ENCODE measurements at regions of chr6 and their contacts with region 1.

Region 1: GRCh38 chr6:99344289-99344688 is 5.2 kb downstream of the FAXC start:
- DNase-seq: peak in 1 of 3 donors; percentile 24
- H3K4me3 ChIP-seq: no peak overlapping the region
- H3K27ac ChIP-seq: no peak overlapping the region
- H3K4me1 ChIP-seq: peaks cover 0 to 5% (median 5%) of the 10 kb centered on the region in 4 experiments
- H3K27me3 ChIP-seq: peaks cover 19 to 55% (median 24%) of the 10 kb centered on the region in 5 experiments

Region 2: GRCh38 chr6:99330159-99330558 is 14.1 kb before region 1 on chr6:
- CTCF ChIA-PET with region 1: interaction called, 22 read pairs
- POLR2A ChIA-PET with region 1: no interaction called
- DNase-seq: peak; percentile 58 to 86 (median 85)
- H3K4me3 ChIP-seq: no peak overlapping the region
- H3K27ac ChIP-seq: no peak overlapping the region
- H3K4me1 ChIP-seq: peaks cover 0 to 2% (median 0%) of the 10 kb centered on the region in 4 experiments
- H3K27me3 ChIP-seq: peaks cover 0 to 11% (median 5%) of the 10 kb centered on the region in 5 experiments

Region 3: GRCh38 chr6:99514089-99514488 is 169.8 kb after region 1 on chr6:
- CTCF ChIA-PET with region 1: no interaction called
- POLR2A ChIA-PET with region 1: no interaction called
- DNase-seq: no peak
- H3K4me3 ChIP-seq: peak overlapping the region in 4 of 7 experiments; percentile 74 to 95 (median 77)
- H3K27ac ChIP-seq: no peak overlapping the region
- H3K4me1 ChIP-seq: peaks cover 0 to 17% (median 5%) of the 10 kb centered on the region in 4 experiments
- H3K27me3 ChIP-seq: peaks cover 0 to 3% (median 0%) of the 10 kb centered on the region in 5 experiments

Region 4: DNA sequence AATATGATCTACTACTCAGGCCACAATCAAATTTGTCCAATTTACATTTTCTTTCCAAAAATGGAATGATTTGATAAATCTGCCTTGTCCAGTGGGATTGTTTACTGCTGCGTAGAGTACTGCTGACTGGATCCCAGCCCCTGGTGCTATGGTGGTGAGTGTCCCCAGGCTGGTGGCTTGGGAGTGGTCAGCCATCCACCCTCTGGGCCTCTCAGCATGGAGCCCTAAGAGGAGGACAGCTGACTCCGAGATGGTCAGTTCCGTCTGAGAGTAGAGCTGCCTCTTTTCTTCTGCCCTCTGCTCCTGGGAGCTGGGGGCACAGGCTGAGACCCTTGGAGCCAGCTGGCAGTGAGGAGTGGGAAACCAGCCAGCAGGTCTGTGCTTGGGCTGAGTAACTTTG is 285.0 kb after region 1 on chr6:
- CTCF ChIA-PET with region 1: no interaction called
- POLR2A ChIA-PET with region 1: no interaction called
- DNase-seq: no peak
- H3K4me3 ChIP-seq: no peak overlapping the region
- H3K27ac ChIP-seq: no peak overlapping the region
- H3K4me1 ChIP-seq: no peaks in the 10 kb centered on the region
- H3K27me3 ChIP-seq: peaks cover 13 to 48% (median 19%) of the 10 kb centered on the region in 5 experiments